Cardiac septum (tissue), 1 donor: ENCODE measurements at regions of chr2 and their contacts with region 1.

Region 1: GRCh38 chr2:206693399-206694137 is 24.6 kb downstream of the DYTN start:
- DNase-seq: no peak

Region 2: DNA sequence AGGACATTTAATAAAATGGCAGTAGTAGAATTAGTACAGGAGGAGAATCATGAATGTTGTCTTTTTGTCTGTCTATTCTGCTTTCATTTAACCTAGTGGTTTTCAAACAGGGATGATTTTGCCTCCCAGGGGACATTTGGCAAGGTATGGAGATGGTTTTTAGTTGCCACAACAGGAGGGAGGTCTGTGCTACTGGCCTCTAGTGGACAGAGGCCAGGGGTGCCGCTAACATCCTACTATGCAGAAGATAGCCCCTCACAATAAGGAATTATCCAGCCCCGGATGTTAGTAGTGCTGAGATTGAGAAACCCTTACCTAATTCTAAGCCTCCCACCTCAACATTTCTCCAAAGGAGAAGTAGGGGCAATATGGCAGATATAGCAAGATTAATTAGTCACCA is 90.2 kb after region 1 on chr2:
- intact Hi-C with region 1: loop called (anchors 2 kb)
- DNase-seq: no peak

Region 3: GRCh38 chr2:207734264-207734635 is 1040.7 kb after region 1 on chr2:
- intact Hi-C with region 1: loop called (anchors 10 kb)
- DNase-seq: no peak